Transverse colon (tissue), 4 donors: ENCODE measurements at regions of chr4 and their contacts with region 1.

Region 1: GRCh38 chr4:122922877-122923511 is 597 bp upstream of the NUDT6 start:
- DNase-seq: peak; percentile 88
- H3K4me3 ChIP-seq: peak overlapping the region; percentile 63 to 83 (median 72)
- H3K27ac ChIP-seq: peak overlapping the region; percentile 77 to 93 (median 88)
- H3K4me1 ChIP-seq: peaks cover 0 to 22% (median 9%) of the 10 kb centered on the region in 4 donors
- H3K27me3 ChIP-seq: no peaks in the 10 kb centered on the region
- CTCF ChIP-seq: no peak
- EP300 ChIP-seq: no peak
- POLR2A ChIP-seq: no peak

Region 2: DNA sequence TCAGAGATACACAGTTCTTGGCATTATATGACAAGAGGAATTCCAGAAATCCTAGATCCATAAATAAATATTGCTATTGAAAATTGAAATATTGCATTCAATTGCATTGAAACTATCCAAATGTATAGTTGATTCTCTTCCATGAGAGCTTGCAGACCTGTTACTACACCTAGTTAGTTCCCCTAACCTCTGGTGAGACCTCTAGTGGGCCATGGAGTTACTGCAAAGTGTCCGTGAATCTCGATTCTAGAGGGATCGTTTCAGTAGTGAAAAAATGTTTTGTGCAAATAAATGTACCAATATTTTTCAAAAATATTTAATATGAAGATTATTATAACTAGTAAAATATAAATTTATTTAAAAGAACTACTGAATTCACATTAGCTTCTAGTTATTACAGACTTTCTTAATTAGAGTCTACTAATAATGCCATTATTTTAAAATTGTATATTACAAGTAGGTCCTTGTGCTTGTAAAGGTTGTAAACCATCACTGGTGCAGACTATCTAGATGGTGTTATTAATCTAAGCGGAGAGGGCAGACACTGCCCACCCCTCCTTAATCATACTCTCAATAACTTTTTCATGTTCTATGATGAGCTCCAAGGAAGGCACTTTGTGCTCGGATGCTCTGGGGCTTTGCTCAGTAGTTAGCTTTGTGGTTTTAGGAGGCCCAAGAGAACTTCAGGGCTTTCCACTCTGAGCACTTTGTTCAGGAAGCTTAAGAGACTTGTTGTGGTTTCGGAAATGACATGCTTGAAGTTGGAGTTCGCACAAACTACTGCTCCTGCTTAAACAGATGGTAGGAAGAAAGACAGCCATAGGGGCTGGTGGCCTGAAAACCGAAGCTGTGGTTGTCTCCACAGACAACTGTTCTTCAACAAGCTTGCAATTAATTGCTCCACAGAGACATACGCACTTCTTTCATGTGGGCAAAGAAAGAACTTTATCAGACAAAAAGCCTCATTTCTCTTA is 344.9 kb before region 1 on chr4:
- in situ Hi-C with region 1: loop called in 1 of 4 experiments (anchors 25 kb)
- intact Hi-C with region 1: no loop called
- DNase-seq: peak; percentile 43
- H3K4me3 ChIP-seq: no peak overlapping the region
- H3K27ac ChIP-seq: no peak overlapping the region
- H3K4me1 ChIP-seq: no peaks in the 10 kb centered on the region
- H3K27me3 ChIP-seq: no peaks in the 10 kb centered on the region
- CTCF ChIP-seq: peak; percentile 30 to 59 (median 54)
- EP300 ChIP-seq: no peak
- POLR2A ChIP-seq: no peak

Region 3: DNA sequence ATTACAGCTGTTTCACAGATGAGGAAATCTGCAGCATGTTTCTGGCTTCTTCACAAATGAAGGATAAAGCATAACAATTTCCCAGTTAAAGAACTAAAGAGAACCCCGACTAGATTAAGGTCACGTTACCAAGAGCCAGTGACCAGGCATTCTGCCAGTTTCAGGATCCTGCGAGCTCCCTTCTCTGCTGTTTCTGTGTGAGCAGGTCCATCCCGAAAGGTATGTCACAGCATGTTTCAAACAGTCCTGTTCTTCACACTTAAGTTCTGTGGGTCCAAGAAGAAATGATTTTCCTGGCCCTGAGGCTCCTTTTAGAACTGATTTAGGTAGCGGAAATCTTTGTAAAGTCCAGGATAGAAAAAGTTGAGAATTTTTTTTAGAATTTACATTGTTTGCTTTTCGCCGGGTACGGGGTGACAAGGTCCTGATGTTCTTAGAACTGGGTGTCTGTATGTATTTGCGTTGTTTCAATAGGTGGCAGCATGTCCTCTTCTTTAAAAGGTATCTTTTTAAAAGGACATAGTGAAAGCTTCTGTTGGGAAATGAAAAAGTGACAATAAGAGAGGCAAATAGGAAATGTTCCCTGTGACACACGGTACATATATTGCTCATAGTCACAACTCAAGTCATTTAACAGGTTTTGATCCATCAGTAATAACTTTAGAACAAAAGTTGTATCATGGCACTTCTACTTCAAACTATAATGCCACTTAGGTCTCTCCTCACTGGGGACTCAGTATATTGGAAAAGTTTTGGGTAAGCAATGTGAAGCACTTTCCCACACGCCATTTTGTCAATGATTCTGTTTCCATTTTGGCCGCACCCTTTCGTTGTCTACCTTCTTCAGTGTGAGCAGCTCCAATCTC is 320.5 kb before region 1 on chr4:
- in situ Hi-C with region 1: loop called in 1 of 4 experiments (anchors 25 kb)
- intact Hi-C with region 1: loop called (anchors 10 kb)
- DNase-seq: no peak
- H3K4me3 ChIP-seq: no peak overlapping the region
- H3K27ac ChIP-seq: no peak overlapping the region
- H3K4me1 ChIP-seq: no peaks in the 10 kb centered on the region
- H3K27me3 ChIP-seq: peaks cover 40% of the 10 kb centered on the region
- CTCF ChIP-seq: peak; percentile 19 to 34 (median 28)
- EP300 ChIP-seq: no peak
- POLR2A ChIP-seq: no peak

Region 4: GRCh38 chr4:122758033-122758432 is 165.0 kb before region 1 on chr4:
- in situ Hi-C with region 1: loop called (anchors 10 to 25 kb)
- intact Hi-C with region 1: loop called (anchors 5 kb)
- DNase-seq: peak; percentile 29
- H3K4me3 ChIP-seq: no peak overlapping the region
- H3K27ac ChIP-seq: peak overlapping the region in 3 of 4 donors; percentile 32 to 51 (median 33)
- H3K4me1 ChIP-seq: peaks cover 0 to 15% (median 5%) of the 10 kb centered on the region in 4 donors
- H3K27me3 ChIP-seq: no peaks in the 10 kb centered on the region
- CTCF ChIP-seq: peak; percentile 75 to 79 (median 76)
- EP300 ChIP-seq: no peak
- POLR2A ChIP-seq: no peak

Region 5: GRCh38 chr4:122764821-122765215 is 158.2 kb before region 1 on chr4:
- in situ Hi-C with region 1: loop called in 3 of 4 experiments (anchors 10 to 25 kb)
- intact Hi-C with region 1: no loop called
- DNase-seq: no peak
- H3K4me3 ChIP-seq: no peak overlapping the region
- H3K27ac ChIP-seq: no peak overlapping the region
- H3K4me1 ChIP-seq: peaks cover 0 to 19% (median 7%) of the 10 kb centered on the region in 4 donors
- H3K27me3 ChIP-seq: no peaks in the 10 kb centered on the region
- CTCF ChIP-seq: no peak
- EP300 ChIP-seq: no peak
- POLR2A ChIP-seq: no peak

Region 6: GRCh38 chr4:122827879-122828601 is 95.0 kb before region 1 on chr4:
- in situ Hi-C with region 1: no loop called
- intact Hi-C with region 1: loop called (anchors 5 kb)
- DNase-seq: peak; percentile 37
- H3K4me3 ChIP-seq: peak overlapping the region; percentile 45 to 81 (median 63)
- H3K27ac ChIP-seq: peak overlapping the region; percentile 83 to 91 (median 86)
- H3K4me1 ChIP-seq: peaks cover 0 to 49% (median 0%) of the 10 kb centered on the region in 4 donors
- H3K27me3 ChIP-seq: peaks cover 46% of the 10 kb centered on the region
- CTCF ChIP-seq: peak in 4 of 5 experiments; percentile 26 to 54 (median 34)
- EP300 ChIP-seq: no peak
- POLR2A ChIP-seq: no peak

Region 7: GRCh38 chr4:123524958-123525628 is 602.1 kb after region 1 on chr4:
- in situ Hi-C with region 1: no loop called
- intact Hi-C with region 1: no loop called
- DNase-seq: no peak
- H3K4me3 ChIP-seq: no peak overlapping the region
- H3K27ac ChIP-seq: no peak overlapping the region
- H3K4me1 ChIP-seq: peaks cover 0 to 13% (median 4%) of the 10 kb centered on the region in 4 donors
- H3K27me3 ChIP-seq: no peaks in the 10 kb centered on the region
- CTCF ChIP-seq: no peak
- EP300 ChIP-seq: no peak
- POLR2A ChIP-seq: no peak